ENCODE measurements at regions of chr22 and their contacts with region 1.

Region 1: DNA sequence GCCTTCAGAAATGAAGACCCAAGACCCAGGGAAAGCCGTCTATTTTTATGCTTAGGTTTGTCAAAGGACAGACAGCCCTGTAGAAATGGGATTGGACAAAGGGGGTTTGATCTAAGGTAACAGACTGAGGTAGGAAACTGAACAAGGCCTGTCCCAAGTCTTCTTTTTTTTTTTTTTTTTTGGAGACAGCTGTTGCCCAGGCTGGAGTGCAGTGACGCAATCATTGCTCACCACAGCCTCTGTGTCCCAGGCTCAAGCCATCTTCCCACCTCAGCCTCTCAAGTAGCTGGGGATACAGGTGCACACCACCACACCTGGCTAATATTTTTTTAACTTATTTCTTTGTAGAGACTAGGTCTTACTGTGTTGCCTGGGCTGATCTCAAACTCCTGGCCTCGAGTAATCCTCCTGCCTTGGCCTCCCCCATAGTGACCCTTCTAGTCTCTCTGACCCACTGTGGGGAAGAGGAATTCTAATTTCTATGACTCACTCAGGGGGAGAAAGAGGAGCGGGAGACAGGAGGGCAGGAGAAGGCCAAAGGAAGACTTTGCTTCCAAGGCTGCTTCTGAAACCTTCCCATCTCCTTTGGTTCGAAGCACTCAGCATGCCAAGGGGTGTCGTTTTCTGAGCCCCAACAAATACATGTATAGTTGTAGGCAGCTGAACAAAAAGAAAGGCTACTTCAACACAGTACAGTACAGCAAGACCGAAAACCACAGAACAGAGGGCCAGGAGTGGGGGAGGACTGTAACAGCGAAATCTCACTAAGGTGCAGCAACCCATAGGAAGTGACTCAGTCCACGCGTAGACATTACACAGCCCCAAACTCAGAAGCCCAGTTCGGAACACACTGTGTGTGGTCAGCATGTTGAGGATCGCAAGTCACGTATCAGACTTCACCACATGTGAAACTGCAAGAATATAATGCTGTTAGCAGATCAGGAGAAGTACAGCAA is 872 bp downstream of the TMA7B start:
- DNase-seq: peak; percentile 90
- H3K4me3 Mint-ChIP-seq: peak overlapping the region; percentile 28
- H3K27ac Mint-ChIP-seq: peak overlapping the region; percentile 80
- H3K4me1 Mint-ChIP-seq: peaks cover 60% of the 10 kb centered on the region
- H3K27me3 Mint-ChIP-seq: no peaks in the 10 kb centered on the region

Region 2: DNA sequence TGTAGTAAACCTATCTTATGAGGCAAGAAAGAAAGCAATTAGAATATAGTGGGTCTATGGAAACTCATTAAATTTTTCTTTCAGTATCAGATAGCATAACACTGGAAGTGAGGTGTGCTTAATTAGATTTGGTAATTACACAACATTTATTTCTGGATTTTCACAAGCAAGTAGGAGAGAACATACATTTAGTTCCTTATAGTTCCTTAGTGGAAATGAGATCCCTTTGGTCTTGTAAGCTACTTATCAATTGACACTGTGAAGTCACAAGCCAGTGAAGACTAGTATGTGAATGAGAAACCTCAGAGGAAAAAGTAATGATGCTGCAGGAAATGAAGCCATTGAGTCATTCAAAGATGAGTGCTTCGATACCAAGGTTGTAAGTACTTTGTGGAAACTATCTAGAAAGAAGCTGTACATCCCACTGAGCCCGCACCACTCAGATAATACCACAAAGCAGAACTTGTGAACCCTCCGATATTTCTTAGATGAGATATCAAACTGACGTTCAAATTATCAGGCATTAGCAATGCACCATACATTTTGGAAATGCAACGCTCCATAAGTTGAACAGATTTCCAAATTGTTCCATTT is 121.1 kb before region 1 on chr22:
- CTCF ChIA-PET with region 1: no interaction called
- POLR2A ChIA-PET with region 1: no interaction called
- intact Hi-C with region 1: loop called (anchors 1 kb)
- DNase-seq: peak; percentile 63
- H3K4me3 Mint-ChIP-seq: no peak overlapping the region
- H3K27ac Mint-ChIP-seq: no peak overlapping the region
- H3K4me1 Mint-ChIP-seq: peaks cover 14% of the 10 kb centered on the region
- H3K27me3 Mint-ChIP-seq: no peaks in the 10 kb centered on the region

Region 3: DNA sequence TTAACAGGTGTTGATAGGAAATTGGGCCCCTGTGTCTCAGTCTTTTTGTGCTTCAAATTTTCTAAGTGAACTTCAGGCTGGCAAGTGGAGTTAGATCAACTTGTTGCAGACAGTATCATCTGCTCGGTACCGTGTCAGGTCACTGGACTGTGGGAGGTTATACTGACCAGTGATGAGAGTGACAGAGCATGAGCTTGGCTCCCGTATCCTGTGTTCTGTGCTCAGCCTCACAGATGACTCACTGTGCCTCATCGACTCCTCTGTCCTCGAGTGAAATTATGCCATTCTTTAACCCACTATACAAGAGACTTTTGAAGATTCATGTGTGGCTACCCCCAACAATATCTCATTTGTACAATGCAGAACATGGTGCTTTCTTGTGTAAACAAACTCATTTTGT is 52.3 kb before region 1 on chr22:
- CTCF ChIA-PET with region 1: interaction called, 3 read pairs
- POLR2A ChIA-PET with region 1: no interaction called
- intact Hi-C with region 1: loop called (anchors 1 kb)
- DNase-seq: peak; percentile 69
- H3K4me3 Mint-ChIP-seq: peak overlapping the region; percentile 83
- H3K27ac Mint-ChIP-seq: peak overlapping the region; percentile 93
- H3K4me1 Mint-ChIP-seq: peaks cover 58% of the 10 kb centered on the region
- H3K27me3 Mint-ChIP-seq: no peaks in the 10 kb centered on the region

Region 4: GRCh38 chr22:40258451-40259046 is 297.5 kb after region 1 on chr22:
- CTCF ChIA-PET with region 1: no interaction called
- POLR2A ChIA-PET with region 1: no interaction called
- intact Hi-C with region 1: loop called (anchors 5 kb)
- DNase-seq: peak; percentile 31
- H3K4me3 Mint-ChIP-seq: no peak overlapping the region
- H3K27ac Mint-ChIP-seq: peak overlapping the region; percentile 75
- H3K4me1 Mint-ChIP-seq: peaks cover 67% of the 10 kb centered on the region
- H3K27me3 Mint-ChIP-seq: no peaks in the 10 kb centered on the region